ENCODE measurements at regions of chr16 and their contacts with region 1.

Region 1: GRCh38 chr16:85441189-85441889 is 171.8 kb upstream of the GSE1 start:
- DNase-seq: no peak

Region 2: GRCh38 chr16:85426410-85427205 is 14.7 kb before region 1 on chr16:
- intact Hi-C with region 1: loop called in 1 of 2 experiments (anchors 2 kb)
- DNase-seq: peak; percentile 48

Region 3: GRCh38 chr16:86531191-86531545 is 1089.8 kb after region 1 on chr16:
- intact Hi-C with region 1: loop called in 1 of 2 experiments (anchors 5 kb)
- DNase-seq: peak; percentile 90

Region 4: GRCh38 chr16:87216474-87217275 is 1775.3 kb after region 1 on chr16:
- intact Hi-C with region 1: no loop called
- DNase-seq: peak; percentile 90

Measured in posterior vena cava (tissue), 2 donors.